GM23248 (cell line): ENCODE measurements at regions of chr4 and their contacts with region 1.

Region 1: GRCh38 chr4:169458575-169458974 is 153.8 kb downstream of the NEK1 start:
- DNase-seq: no peak
- H3K4me3 ChIP-seq: no peak overlapping the region
- H3K27ac ChIP-seq: no peak overlapping the region
- H3K4me1 ChIP-seq: no peaks in the 10 kb centered on the region
- H3K27me3 ChIP-seq: no peaks in the 10 kb centered on the region

Region 2: GRCh38 chr4:169270810-169271691 is 187.5 kb before region 1 on chr4 and contains the start of gene SH3RF1:
- in situ Hi-C with region 1: loop called (anchors 10 kb)
- DNase-seq: peak; percentile 95
- H3K4me3 ChIP-seq: peak within 1 kb of the TSS; percentile 89
- H3K27ac ChIP-seq: peak within 1 kb of the TSS; percentile 79
- H3K4me1 ChIP-seq: peaks cover 35% of the 10 kb centered on the region
- H3K27me3 ChIP-seq: no peaks in the 10 kb centered on the region
- total RNA-seq, gene SH3RF1: 24.9 and 28.3 TPM in 2 replicates

Region 3: DNA sequence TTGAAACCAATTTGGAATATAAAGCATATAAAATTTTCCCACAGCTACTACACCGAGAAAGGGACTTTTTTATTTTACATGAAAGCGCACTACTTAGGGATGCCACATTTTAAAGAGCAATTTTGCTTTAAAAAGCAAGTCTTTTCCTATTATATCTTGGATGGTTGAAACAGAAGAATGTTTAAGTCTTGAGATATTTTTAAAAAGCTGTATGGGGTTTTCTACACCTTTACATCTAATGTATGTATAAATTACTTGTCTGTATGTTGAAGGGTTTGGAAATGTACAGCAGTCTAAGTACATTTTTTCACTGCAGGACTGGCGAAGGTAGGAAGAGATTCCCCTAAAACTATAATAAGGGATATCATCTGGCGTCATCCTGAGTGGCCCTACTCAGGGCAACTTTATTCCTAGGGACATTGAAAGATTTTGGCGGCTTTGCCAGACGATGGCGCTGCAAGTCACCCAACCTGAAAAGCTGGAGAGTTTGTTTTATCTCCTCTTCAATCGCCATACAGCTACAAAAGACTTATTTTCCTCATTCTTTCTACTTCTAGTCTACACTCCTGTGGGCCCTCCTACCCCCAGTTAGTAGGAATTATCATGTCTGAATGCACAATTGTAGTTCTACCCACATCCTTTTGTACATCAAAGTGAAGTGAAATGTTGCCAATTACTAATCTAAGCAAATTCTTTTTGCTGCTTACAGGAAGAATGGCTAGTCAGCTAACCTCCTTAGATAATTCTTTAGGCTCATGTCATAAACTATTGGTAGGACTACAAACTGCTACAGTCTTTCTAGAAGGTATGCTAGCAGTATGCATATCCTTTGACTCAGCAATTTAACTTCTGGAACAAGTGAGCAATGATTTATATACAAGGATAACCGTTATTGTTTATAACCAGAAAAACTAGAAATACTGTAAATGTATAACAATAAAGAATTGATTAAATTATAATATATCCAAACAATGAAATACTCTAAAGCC is 154.6 kb after region 1 on chr4:
- in situ Hi-C with region 1: no loop called
- DNase-seq: peak; percentile 88
- H3K4me3 ChIP-seq: peak overlapping the region; percentile 90
- H3K27ac ChIP-seq: peak overlapping the region; percentile 92
- H3K4me1 ChIP-seq: peaks cover 18% of the 10 kb centered on the region
- H3K27me3 ChIP-seq: no peaks in the 10 kb centered on the region